PC-3 (cell line): ENCODE measurements at regions of chr4 and their contacts with region 1.

Region 1: DNA sequence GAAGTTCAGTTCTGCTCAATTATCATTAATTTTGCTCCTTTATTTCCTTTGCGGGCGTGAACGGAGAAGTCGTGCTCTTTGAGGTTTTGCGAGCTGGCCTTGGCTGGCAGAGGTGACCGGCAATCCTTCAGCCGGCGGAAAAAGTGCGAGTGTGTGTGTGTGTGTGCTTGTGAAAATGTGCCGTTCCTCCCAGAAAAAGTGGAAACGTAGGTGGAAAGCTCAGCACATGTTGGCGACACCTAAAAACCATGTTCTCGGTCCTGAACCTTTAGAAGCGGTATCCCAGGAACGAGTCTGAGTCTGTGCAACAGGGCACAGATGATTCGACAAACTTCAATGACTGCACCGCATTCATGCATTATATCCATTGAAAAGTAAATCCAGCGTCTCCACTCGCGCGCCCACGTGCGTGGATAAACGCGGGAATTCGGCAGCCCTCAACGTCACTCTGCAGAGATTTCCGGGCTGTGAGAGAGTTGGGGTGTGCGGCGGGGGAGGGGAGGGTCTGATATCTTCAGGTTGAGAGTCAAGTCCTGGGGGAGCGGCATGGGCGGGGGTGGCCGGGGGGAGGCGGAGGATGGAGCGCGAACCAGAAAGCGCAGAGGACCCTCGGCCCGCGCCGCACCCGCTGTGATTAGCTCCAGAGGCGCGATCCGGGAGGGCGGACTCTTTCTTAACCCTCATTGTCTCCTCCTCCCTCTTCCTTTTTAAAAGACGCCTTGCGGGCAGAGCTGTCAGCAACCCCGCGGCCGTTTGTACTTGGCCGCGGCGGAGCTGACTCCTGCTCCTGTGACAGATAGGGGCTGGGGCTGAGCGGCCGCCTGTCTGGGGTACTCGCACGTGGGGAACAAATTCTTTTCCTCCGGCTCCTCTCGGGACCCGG is at the start of gene SHISA3:
- DNase-seq: peak; percentile 53
- ATAC-seq: peak; percentile 68
- H3K4me3 ChIP-seq: peak within 1 kb of the TSS; percentile 90
- H3K27ac ChIP-seq: no peak within 1 kb of the TSS
- H3K4me1 ChIP-seq: peaks cover 11% of the 10 kb centered on the region; the same call in 1 of the 2 replicates
- H3K27me3 ChIP-seq: no peaks in the 10 kb centered on the region
- CTCF ChIP-seq: no peak
- total RNA-seq, gene SHISA3: 29.5 and 33.5 TPM in 2 replicates

Region 2: GRCh38 chr4:41281038-41281634 is 1115.9 kb before region 1 on chr4:
- CTCF ChIA-PET with region 1: no interaction called
- POLR2A ChIA-PET with region 1: no interaction called
- intact Hi-C with region 1: no loop called
- DNase-seq: peak; percentile 84
- ATAC-seq: peak; percentile 94
- H3K4me3 ChIP-seq: no peak overlapping the region
- H3K27ac ChIP-seq: no peak overlapping the region
- H3K4me1 ChIP-seq: peaks cover 4% of the 10 kb centered on the region; the same call in 1 of the 2 replicates
- H3K27me3 ChIP-seq: no peaks in the 10 kb centered on the region
- CTCF ChIP-seq: peak; percentile 90

Region 3: GRCh38 chr4:42320822-42321388 is 76.1 kb before region 1 on chr4:
- CTCF ChIA-PET with region 1: no interaction called
- POLR2A ChIA-PET with region 1: no interaction called
- intact Hi-C with region 1: no loop called
- DNase-seq: no peak
- ATAC-seq: no peak
- H3K4me3 ChIP-seq: no peak overlapping the region
- H3K27ac ChIP-seq: no peak overlapping the region
- H3K4me1 ChIP-seq: no peaks in the 10 kb centered on the region
- H3K27me3 ChIP-seq: no peaks in the 10 kb centered on the region
- CTCF ChIP-seq: no peak

Region 4: DNA sequence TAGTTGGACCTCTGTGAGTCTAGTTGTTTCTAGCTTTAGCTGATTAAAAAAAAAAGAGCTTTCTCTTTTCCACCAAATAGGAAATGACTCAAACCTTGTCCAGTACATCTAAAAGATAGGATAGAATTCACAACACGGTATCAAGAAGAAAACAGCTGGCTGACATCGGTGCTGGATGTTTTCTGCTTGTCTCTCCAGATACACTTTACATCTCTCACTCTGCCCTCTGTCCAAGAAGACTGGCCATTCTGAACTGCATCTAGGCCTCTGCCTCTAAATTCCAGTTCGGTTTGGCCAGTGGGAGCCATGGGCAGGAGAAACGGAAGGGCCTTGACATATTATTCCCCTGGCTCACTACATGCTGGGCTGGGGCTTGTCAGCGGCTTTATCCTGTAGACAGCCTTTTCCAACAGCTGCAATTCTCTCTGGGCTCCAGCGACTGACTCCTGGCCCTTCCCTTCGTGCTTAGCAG is 57.0 kb before region 1 on chr4:
- CTCF ChIA-PET with region 1: no interaction called
- POLR2A ChIA-PET with region 1: no interaction called
- intact Hi-C with region 1: no loop called
- DNase-seq: no peak
- ATAC-seq: no peak
- H3K4me3 ChIP-seq: no peak overlapping the region
- H3K27ac ChIP-seq: no peak overlapping the region
- H3K4me1 ChIP-seq: no peaks in the 10 kb centered on the region
- H3K27me3 ChIP-seq: no peaks in the 10 kb centered on the region
- CTCF ChIP-seq: no peak

Region 5: DNA sequence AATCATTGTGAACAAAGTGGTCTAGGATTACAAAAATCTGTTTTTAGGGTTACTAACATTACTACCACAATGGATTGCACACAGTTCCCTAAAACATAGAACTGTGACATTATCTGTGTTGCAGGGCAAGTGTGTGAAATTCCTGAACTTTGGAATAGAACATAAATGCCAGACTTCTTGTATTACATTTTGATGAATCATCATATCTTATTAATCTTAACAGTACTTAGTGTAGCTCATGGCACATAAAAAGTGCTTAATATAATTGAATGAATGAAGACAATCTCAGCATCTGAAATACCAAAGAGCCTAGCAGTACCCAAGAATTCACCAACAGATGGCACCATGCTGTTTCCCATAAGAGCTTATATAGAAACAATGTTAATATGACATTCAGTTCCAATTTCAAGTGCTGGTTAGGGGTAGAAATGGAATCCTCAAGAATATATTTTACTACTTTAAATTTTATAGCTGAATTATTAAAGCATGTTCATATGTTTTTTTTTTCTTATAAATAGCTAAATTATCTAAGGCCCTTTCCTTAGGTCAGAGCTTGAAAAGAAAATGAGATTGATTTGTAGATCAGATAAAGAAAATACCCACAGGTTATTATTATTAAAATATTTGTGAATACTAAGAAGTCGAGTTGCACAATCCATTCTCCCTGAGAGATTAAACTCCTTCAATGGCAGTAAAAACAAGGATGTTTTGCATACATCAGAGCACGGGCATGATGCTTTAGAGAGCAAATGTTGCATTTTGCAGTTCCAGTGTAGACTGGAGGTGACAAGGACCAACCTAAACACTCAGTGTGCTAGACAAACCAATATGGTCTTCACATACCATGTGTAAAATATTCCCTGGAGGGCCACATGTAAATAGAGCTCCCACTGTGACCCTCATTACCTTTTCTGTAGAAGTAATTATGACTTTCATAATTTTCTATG is 25.4 kb before region 1 on chr4:
- CTCF ChIA-PET with region 1: interaction called, 5 read pairs
- POLR2A ChIA-PET with region 1: interaction called, 11 read pairs
- intact Hi-C with region 1: loop called (anchors 2 kb)
- DNase-seq: peak; percentile 77
- ATAC-seq: peak; percentile 80
- H3K4me3 ChIP-seq: no peak overlapping the region
- H3K27ac ChIP-seq: no peak overlapping the region
- H3K4me1 ChIP-seq: no peaks in the 10 kb centered on the region
- H3K27me3 ChIP-seq: no peaks in the 10 kb centered on the region
- CTCF ChIP-seq: peak; percentile 68